Sigmoid colon (tissue), 7 donors: ENCODE measurements at regions of chr12 and their contacts with region 1.

Region 1: GRCh38 chr12:94875525-94875924 is 128.0 kb downstream of the NDUFA12 start:
- DNase-seq: no peak
- H3K4me3 ChIP-seq: no peak overlapping the region
- H3K27ac ChIP-seq: peak overlapping the region in 1 of 4 donors; percentile 64
- H3K4me1 ChIP-seq: peaks cover 0 to 28% (median 24%) of the 10 kb centered on the region in 4 donors
- H3K27me3 ChIP-seq: peaks cover 7 to 38% (median 28%) of the 10 kb centered on the region in 3 donors
- CTCF ChIP-seq: no peak
- EP300 ChIP-seq: no peak
- POLR2A ChIP-seq: no peak

Region 2: DNA sequence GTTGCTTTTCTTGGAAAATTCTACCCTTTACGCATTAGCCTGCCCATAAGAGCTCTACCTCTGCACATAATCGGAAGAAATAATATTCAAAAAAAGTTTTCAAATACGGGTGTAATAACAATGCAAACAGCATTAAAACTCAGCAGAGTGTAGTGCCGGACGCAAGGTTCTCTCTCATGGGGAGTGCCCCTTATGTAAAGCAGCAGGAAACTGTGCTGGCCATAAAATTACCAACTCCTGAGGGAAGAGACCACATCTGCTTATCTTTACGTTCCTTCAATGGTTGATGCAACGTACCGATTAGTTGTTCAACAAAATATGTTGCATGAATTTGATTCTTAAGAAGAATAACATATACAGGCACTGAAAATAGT is 106.5 kb before region 1 on chr12:
- intact Hi-C with region 1: loop called (anchors 5 kb)
- DNase-seq: no peak
- H3K4me3 ChIP-seq: no peak overlapping the region
- H3K27ac ChIP-seq: no peak overlapping the region
- H3K4me1 ChIP-seq: peaks cover 0 to 24% (median 9%) of the 10 kb centered on the region in 4 donors
- H3K27me3 ChIP-seq: no peaks in the 10 kb centered on the region
- CTCF ChIP-seq: no peak
- EP300 ChIP-seq: no peak
- POLR2A ChIP-seq: no peak

Region 3: GRCh38 chr12:94831081-94831751 is 44.3 kb before region 1 on chr12:
- intact Hi-C with region 1: loop called (anchors 5 kb)
- DNase-seq: no peak
- H3K4me3 ChIP-seq: no peak overlapping the region
- H3K27ac ChIP-seq: peak overlapping the region in 3 of 4 donors; percentile 3 to 76 (median 75)
- H3K4me1 ChIP-seq: peaks cover 0 to 26% (median 16%) of the 10 kb centered on the region in 4 donors
- H3K27me3 ChIP-seq: no peaks in the 10 kb centered on the region
- CTCF ChIP-seq: no peak
- EP300 ChIP-seq: no peak
- POLR2A ChIP-seq: no peak